HCT116 (cell line): ENCODE measurements at regions of chr22 and their contacts with region 1.

Region 1: DNA sequence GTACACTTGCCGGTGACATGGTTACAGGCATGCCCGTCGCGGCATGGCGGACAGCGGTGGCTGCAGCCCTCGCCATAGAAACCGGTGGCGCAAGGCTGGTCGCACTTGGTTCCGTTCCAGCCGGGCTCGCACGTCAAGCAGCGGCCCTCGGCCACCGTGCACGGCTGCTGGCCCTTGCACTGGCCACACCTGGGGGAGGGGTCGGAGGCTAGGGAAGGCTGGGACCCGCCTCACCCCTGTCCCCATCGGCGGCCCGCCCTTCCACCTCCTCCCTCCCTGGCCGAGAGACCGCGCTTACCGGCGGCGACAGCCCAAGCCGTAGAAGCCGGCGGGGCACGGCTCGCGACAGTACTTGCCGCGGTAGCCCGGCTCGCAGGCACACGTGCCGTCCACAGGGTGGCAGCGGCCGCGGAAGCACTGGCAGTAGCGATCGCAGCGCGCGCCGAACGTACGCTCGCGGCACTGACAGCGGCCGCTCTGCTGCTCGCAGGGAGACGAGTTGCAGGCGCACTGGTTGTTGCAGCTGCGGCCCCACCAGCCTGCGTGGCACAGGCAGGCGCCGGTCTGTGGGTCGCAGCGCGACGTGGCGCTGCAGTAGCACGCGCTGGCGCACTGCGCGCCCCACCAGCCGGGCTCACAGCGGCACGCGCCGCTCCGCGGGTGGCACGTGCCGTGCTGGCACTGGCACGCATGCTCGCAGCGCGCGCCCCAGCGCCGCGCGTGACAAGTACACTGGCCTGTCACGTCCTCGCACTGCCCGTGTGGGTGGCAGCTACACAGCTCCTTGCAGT is 6.7 kb downstream of the SCARF2 start:
- DNase-seq: peak; percentile 33
- ATAC-seq: peak; percentile 84
- H3K4me3 ChIP-seq: peak overlapping the region; percentile 33 to 52
- H3K27ac ChIP-seq: peak overlapping the region; percentile 3; the same call in 1 of the 2 replicates
- H3K4me1 ChIP-seq: peaks cover 16 to 35% of the 10 kb centered on the region in 2 experiments
- H3K27me3 ChIP-seq: no peaks in the 10 kb centered on the region
- CTCF ChIP-seq: peak; percentile 12 to 57 (median 44); a peak in 4 of 6 replicates
- POLR2A ChIP-seq: no peak
- RAD21 ChIP-seq: no peak

Region 2: GRCh38 chr22:20456064-20456721 is 25.3 kb after region 1 on chr22:
- CTCF ChIA-PET with region 1: interaction called, 3 read pairs
- POLR2A ChIA-PET with region 1: interaction called, 3 read pairs
- RAD21 ChIA-PET with region 1: no interaction called
- intact Hi-C with region 1: loop called (anchors 1 kb)
- DNase-seq: peak; percentile 54
- ATAC-seq: peak; percentile 96
- H3K4me3 ChIP-seq: no peak overlapping the region
- H3K27ac ChIP-seq: no peak overlapping the region
- H3K4me1 ChIP-seq: peaks cover 0 to 3% of the 10 kb centered on the region in 2 experiments; a peak in 1 of 4 replicates
- H3K27me3 ChIP-seq: no peaks in the 10 kb centered on the region
- CTCF ChIP-seq: peak; percentile 78 to 92 (median 91)
- POLR2A ChIP-seq: no peak
- RAD21 ChIP-seq: peak; percentile 84